ENCODE measurements at regions of chr12 and their contacts with region 1.

Region 1: GRCh38 chr12:9813821-9814809 is 13.2 kb upstream of the KLRF1 start:
- DNase-seq: peak; percentile 90
- ATAC-seq: peak; percentile 97
- H3K4me3 Mint-ChIP-seq: peak overlapping the region; percentile 53
- H3K27ac Mint-ChIP-seq: no peak overlapping the region
- H3K4me1 Mint-ChIP-seq: peaks cover 10% of the 10 kb centered on the region
- H3K27me3 Mint-ChIP-seq: peaks cover 7% of the 10 kb centered on the region
- CTCF ChIP-seq: peak; percentile 81

Region 2: GRCh38 chr12:9750276-9751203 is 63.6 kb before region 1 on chr12:
- CTCF ChIA-PET with region 1: interaction called, 41 read pairs
- POLR2A ChIA-PET with region 1: no interaction called
- DNase-seq: no peak
- ATAC-seq: peak; percentile 78
- H3K4me3 Mint-ChIP-seq: peak overlapping the region; percentile 49
- H3K27ac Mint-ChIP-seq: no peak overlapping the region
- H3K4me1 Mint-ChIP-seq: peaks cover 16% of the 10 kb centered on the region
- H3K27me3 Mint-ChIP-seq: no peaks in the 10 kb centered on the region; the same call in 1 of the 2 replicates
- CTCF ChIP-seq: peak; percentile 83

Region 3: DNA sequence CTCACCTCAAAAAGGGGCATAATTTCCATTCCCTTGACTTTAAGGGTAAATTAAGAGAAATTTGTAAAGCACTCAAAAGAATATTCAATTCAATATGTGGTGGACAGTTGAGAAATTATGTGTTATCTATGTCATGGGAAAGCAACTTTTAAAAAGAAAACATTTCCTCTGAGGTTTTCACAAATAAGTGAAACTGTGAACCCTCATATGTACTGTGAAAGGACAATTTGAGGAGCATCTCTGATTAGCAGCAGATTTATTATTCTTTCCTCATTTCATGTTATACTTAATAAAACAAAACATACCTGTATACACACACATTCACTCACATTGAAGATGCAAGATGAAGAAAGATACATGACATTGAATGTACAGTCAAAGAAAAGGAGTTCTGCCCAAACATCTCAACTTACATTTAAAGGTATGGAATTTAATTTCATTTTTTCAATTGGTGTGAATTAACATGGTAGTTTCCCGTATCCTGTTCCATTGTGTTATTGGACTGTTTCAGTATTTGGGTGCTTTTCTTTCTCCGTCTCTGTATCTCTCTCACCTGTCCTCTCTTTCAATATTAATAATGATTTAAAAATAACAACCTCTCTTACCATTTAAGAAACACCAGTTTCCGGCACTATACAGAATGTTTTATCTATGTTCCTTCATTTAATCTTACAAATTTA is 13.2 kb after region 1 on chr12 and contains the start of gene KLRF1:
- CTCF ChIA-PET with region 1: interaction called, 11 read pairs
- POLR2A ChIA-PET with region 1: no interaction called
- DNase-seq: no peak
- ATAC-seq: no peak
- H3K4me3 Mint-ChIP-seq: no peak within 1 kb of the TSS
- H3K27ac Mint-ChIP-seq: no peak within 1 kb of the TSS
- H3K4me1 Mint-ChIP-seq: no peaks in the 10 kb centered on the region
- H3K27me3 Mint-ChIP-seq: peaks cover 8% of the 10 kb centered on the region
- CTCF ChIP-seq: no peak
- total RNA-seq, gene KLRF1: not detected in 3 replicates

Region 4: GRCh38 chr12:10012630-10013330 is 198.7 kb after region 1 on chr12:
- CTCF ChIA-PET with region 1: interaction called, 10 read pairs
- POLR2A ChIA-PET with region 1: no interaction called
- DNase-seq: no peak
- ATAC-seq: no peak
- H3K4me3 Mint-ChIP-seq: no peak overlapping the region
- H3K27ac Mint-ChIP-seq: no peak overlapping the region
- H3K4me1 Mint-ChIP-seq: peaks cover 10% of the 10 kb centered on the region
- H3K27me3 Mint-ChIP-seq: no peaks in the 10 kb centered on the region
- CTCF ChIP-seq: no peak

Measured in WTC11 (cell line).